Endothelial cell of umbilical vein (primary cell): ENCODE measurements at regions of chr12 and their contacts with region 1.

Region 1: GRCh38 chr12:94710933-94711332 is 60.6 kb upstream of the TMCC3 start:
- DNase-seq: peak; percentile 29
- H3K4me3 ChIP-seq: no peak overlapping the region
- H3K27ac ChIP-seq: no peak overlapping the region
- H3K4me1 ChIP-seq: peaks cover 14% of the 10 kb centered on the region
- H3K27me3 ChIP-seq: no peaks in the 10 kb centered on the region
- CTCF ChIP-seq: peak; percentile 44 to 47
- POLR2A ChIP-seq: no peak

Region 2: GRCh38 chr12:93624595-93625294 is 1086.2 kb before region 1 on chr12:
- CTCF ChIA-PET with region 1: no interaction called
- POLR2A ChIA-PET with region 1: no interaction called
- dilution Hi-C with region 1: no loop called
- intact Hi-C with region 1: no loop called
- DNase-seq: peak; percentile 54
- H3K4me3 ChIP-seq: no peak overlapping the region
- H3K27ac ChIP-seq: peak overlapping the region; percentile 57
- H3K4me1 ChIP-seq: peaks cover 9% of the 10 kb centered on the region
- H3K27me3 ChIP-seq: no peaks in the 10 kb centered on the region
- CTCF ChIP-seq: no peak
- POLR2A ChIP-seq: no peak

Region 3: DNA sequence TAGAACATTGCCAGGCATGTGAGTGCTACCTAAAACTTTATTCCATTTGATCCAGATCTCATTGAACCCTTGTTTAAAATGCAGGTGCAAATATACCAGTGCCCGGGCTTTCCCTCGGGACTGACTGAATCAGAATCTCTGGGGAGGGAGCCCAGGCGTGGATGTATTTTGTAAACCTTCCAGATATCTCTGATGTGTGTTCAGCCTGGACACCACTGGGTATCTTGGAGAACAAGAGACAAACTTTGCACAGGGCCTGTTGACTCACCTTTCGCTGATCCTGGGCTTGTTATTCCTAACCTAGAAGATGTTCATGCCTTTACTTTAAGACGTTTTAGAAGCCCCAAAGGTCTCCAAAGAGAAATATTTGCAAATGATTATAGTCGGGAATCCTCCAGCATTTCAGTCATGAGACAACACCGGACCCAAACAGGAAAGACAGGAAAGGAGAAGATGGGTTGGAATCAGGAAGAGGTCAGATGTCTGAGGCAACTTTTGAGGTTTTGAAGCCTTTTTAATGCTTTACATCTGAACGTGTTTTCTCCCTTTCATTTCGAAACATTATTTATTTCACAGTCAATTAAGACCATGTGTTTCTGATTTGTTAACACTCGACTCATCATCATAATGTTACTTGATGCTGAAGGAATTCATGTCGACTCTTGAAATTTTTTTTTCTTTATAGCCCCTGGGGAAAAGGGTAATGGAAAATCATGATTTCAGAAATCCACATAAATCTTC is 444.0 kb before region 1 on chr12:
- CTCF ChIA-PET with region 1: no interaction called
- POLR2A ChIA-PET with region 1: no interaction called
- dilution Hi-C with region 1: no loop called
- intact Hi-C with region 1: no loop called
- DNase-seq: no peak
- H3K4me3 ChIP-seq: no peak overlapping the region
- H3K27ac ChIP-seq: no peak overlapping the region
- H3K4me1 ChIP-seq: no peaks in the 10 kb centered on the region
- H3K27me3 ChIP-seq: peaks cover 5 to 18% of the 10 kb centered on the region in 2 experiments
- CTCF ChIP-seq: no peak
- POLR2A ChIP-seq: no peak

Region 4: DNA sequence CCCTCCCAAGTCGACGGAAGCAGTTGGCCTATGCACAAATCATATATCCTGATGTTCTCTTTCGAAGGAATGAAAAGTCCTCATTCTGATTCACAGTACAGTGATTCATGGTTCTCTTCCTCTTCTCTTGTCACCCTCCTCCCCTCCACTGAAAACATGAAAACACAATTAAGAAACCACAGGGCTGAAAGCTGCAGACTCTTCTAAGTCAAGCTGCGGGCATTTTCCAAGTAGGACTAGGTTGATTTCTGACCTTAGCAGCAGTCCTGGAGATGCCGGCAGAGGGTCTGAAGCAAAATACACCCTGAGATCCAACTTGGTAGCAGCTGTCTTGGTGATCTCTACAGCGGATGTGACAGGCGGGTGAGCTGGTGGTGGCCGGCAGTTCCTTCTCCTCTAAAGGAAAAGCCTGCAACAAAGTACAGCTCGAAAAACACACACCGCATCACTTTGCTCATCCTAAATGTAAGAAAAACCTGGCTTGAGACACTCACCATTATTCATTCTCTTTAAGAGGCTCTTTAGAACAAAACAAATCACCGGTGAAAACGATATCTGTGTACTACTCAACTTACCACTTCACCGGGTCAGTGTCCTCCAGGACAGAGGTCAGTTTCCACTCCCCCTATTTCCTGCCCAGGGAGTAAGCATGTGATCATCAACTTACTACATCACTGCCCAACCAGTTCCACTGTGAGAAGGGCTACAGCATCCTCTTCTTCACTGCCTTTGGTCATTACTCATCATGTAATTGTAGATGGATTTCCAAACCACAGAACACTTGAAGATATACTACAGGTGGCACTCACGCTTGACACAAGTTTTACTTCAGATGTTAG is 66.6 kb before region 1 on chr12:
- CTCF ChIA-PET with region 1: no interaction called
- POLR2A ChIA-PET with region 1: no interaction called
- dilution Hi-C with region 1: no loop called
- intact Hi-C with region 1: loop called (anchors 1 kb)
- DNase-seq: peak; percentile 83
- H3K4me3 ChIP-seq: peak overlapping the region in 1 of 3 experiments; percentile 34
- H3K27ac ChIP-seq: peak overlapping the region; percentile 79
- H3K4me1 ChIP-seq: peaks cover 43% of the 10 kb centered on the region
- H3K27me3 ChIP-seq: no peaks in the 10 kb centered on the region
- CTCF ChIP-seq: no peak
- POLR2A ChIP-seq: no peak

Region 5: DNA sequence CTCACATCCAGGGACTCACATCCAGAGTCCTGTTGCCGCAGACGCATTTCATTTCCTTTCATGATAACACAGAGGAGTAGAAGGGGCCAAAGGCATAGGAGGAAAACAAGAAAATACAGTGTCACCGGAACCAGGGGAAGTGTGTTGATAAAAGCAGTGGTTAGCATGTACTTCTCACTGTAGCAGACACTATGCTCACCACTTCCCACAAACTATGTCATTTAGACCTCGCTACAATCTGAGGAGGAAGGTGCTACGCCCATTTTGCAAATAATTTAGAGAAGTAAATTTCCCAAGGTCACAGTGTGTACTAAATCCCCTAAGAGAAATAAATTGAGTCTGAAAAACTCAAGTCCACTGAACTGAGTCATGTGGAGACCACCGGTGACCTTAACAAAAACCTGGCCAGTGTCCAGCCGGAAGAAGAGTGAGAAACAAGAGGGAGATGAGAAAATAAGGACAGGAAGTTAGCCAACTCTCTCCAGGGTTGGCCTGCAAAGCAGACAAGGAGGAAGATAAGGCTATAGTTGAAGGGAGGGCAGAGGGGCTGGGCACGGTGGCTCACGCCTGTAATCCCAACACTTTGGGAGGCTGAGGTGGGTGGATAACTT is 34.8 kb before region 1 on chr12:
- CTCF ChIA-PET with region 1: interaction called, 6 read pairs
- POLR2A ChIA-PET with region 1: no interaction called
- dilution Hi-C with region 1: no loop called
- intact Hi-C with region 1: loop called (anchors 1 kb)
- DNase-seq: peak; percentile 84
- H3K4me3 ChIP-seq: no peak overlapping the region
- H3K27ac ChIP-seq: peak overlapping the region; percentile 66
- H3K4me1 ChIP-seq: peaks cover 40% of the 10 kb centered on the region
- H3K27me3 ChIP-seq: no peaks in the 10 kb centered on the region
- CTCF ChIP-seq: no peak
- POLR2A ChIP-seq: no peak

Region 6: GRCh38 chr12:94725375-94726168 is 14.6 kb after region 1 on chr12:
- CTCF ChIA-PET with region 1: interaction called, 12 read pairs
- POLR2A ChIA-PET with region 1: no interaction called
- dilution Hi-C with region 1: no loop called
- intact Hi-C with region 1: no loop called
- DNase-seq: peak; percentile 71
- H3K4me3 ChIP-seq: no peak overlapping the region
- H3K27ac ChIP-seq: no peak overlapping the region
- H3K4me1 ChIP-seq: no peaks in the 10 kb centered on the region
- H3K27me3 ChIP-seq: no peaks in the 10 kb centered on the region
- CTCF ChIP-seq: peak; percentile 39 to 47
- POLR2A ChIP-seq: no peak

Region 7: DNA sequence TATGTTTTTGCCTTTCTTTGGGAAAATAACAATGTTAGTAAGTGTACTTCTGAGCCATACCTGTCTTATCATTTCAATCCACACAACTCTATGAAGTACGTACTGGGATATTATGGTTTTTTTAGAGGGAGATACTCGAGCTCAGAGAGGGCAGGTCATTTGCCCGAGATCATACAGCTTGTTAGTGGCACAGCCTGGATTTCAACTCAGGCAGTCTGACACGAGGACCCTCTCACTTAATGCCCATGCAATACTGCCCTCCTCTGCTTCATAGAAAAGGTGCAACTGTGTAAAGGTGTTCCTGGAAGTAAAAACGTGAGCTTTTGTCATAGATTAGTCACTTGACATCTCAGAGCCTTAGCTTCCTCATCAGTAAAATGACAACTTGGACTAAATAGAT is 164.6 kb after region 1 on chr12:
- CTCF ChIA-PET with region 1: interaction called, 9 read pairs
- POLR2A ChIA-PET with region 1: no interaction called
- dilution Hi-C with region 1: no loop called
- intact Hi-C with region 1: loop called (anchors 5 kb)
- DNase-seq: peak; percentile 41
- H3K4me3 ChIP-seq: no peak overlapping the region
- H3K27ac ChIP-seq: no peak overlapping the region
- H3K4me1 ChIP-seq: no peaks in the 10 kb centered on the region
- H3K27me3 ChIP-seq: peaks cover 44 to 52% of the 10 kb centered on the region in 2 experiments
- CTCF ChIP-seq: peak in 1 of 2 donors; percentile 27
- POLR2A ChIP-seq: no peak